Colonic mucosa (tissue), 4 donors: ENCODE measurements at regions of chr5 and their contacts with region 1.

Region 1: GRCh38 chr5:59506285-59506877 is 387.1 kb downstream of the PDE4D start:
- DNase-seq: no peak
- H3K4me3 ChIP-seq: no peak overlapping the region
- H3K27ac ChIP-seq: no peak overlapping the region
- H3K4me1 ChIP-seq: no peaks in the 10 kb centered on the region
- H3K27me3 ChIP-seq: no peaks in the 10 kb centered on the region
- CTCF ChIP-seq: peak; percentile 43

Region 2: DNA sequence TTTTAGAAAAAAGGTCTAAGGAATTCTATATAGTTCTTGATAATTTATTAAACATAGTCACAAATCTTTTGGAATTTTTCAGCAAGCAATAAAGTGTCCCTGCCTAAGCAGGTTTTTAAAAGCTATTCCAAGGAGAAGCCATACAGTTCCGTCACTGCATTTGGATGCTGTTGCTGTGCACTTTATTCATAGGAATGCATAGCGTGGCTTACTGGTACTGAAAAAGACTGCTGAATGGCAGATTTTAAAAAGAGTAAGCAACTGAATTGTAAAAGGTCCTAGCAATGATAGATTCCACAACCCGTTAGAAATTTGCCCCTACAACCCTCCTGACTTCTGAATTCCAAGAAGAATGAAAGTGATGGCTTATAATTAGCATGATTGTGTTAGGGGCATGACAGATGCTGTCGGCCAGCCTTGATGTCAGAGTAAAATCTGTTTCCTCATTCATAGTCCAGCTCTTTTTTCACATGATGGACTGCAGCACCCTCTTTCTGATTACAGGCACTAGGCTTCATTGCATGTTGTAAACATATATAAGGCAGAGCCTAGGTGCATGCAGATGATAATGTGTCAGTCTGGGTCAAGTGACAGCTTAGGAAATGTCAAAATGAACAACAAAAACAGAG is 160.2 kb after region 1 on chr5:
- intact Hi-C with region 1: loop called (anchors 5 kb)
- DNase-seq: no peak
- H3K4me3 ChIP-seq: no peak overlapping the region
- H3K27ac ChIP-seq: no peak overlapping the region
- H3K4me1 ChIP-seq: no peaks in the 10 kb centered on the region
- H3K27me3 ChIP-seq: no peaks in the 10 kb centered on the region
- CTCF ChIP-seq: peak; percentile 17